AG04450 (cell line): ENCODE measurements at regions of chr6 and their contacts with region 1.

Region 1: DNA sequence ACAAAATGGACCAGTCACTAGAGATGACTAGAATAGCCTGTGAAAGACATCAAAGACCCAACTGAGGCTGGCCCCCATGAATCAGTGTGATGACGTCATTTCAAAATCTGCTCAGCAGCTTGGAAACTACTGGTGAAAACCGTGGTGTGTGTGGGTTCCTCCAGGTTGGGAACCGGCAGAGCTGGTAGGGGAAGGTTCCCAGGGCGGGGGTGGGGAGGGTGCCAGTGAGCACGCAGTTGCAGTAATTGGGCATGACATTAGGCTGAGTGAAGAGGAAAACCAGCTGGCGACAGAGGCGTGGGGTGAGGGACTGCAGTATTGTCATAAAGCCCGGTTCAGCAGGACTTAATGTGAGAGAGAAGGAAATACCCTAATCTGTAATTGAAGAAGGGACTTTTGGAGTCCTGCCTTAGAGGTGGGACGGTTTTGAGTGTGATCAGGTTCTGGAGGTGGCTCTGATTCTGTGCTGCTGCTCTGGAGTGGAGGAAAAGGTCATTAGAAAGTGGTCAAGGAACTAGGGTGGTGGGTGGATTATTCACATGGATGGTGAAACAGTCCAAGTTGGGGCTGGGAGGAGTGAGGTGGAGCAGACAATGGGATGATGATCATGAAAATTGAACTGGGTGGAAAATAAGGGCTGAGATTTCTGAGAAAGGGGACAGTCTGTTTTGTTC is 52.0 kb upstream of the MTHFD1L start:
- DNase-seq: no peak
- H3K4me3 ChIP-seq: no peak overlapping the region
- H3K27ac ChIP-seq: no peak overlapping the region
- H3K27me3 ChIP-seq: no peaks in the 10 kb centered on the region
- CTCF ChIP-seq: no peak

Region 2: GRCh38 chr6:150395398-150396009 is 418.0 kb before region 1 on chr6:
- CTCF ChIA-PET with region 1: interaction called, 11 read pairs
- POLR2A ChIA-PET with region 1: no interaction called
- DNase-seq: peak; percentile 6
- H3K4me3 ChIP-seq: no peak overlapping the region
- H3K27ac ChIP-seq: no peak overlapping the region
- H3K27me3 ChIP-seq: no peaks in the 10 kb centered on the region
- CTCF ChIP-seq: peak; percentile 72

Region 3: GRCh38 chr6:150830439-150831165 is 17.1 kb after region 1 on chr6:
- CTCF ChIA-PET with region 1: interaction called, 26 read pairs
- POLR2A ChIA-PET with region 1: no interaction called
- DNase-seq: peak; percentile 16
- H3K4me3 ChIP-seq: no peak overlapping the region
- H3K27ac ChIP-seq: no peak overlapping the region
- H3K27me3 ChIP-seq: no peaks in the 10 kb centered on the region
- CTCF ChIP-seq: no peak

Region 4: GRCh38 chr6:150865406-150866146 is 52.1 kb after region 1 on chr6 and contains the start of gene MTHFD1L:
- CTCF ChIA-PET with region 1: interaction called, 38 read pairs
- POLR2A ChIA-PET with region 1: interaction called, 12 read pairs
- DNase-seq: peak; percentile 67
- H3K4me3 ChIP-seq: peak within 1 kb of the TSS; percentile 77
- H3K27ac ChIP-seq: peak within 1 kb of the TSS; percentile 98
- H3K27me3 ChIP-seq: no peaks in the 10 kb centered on the region
- CTCF ChIP-seq: peak; percentile 47
- polyA plus RNA-seq, gene MTHFD1L: 62.4 and 69.1 TPM in 2 replicates

Region 5: DNA sequence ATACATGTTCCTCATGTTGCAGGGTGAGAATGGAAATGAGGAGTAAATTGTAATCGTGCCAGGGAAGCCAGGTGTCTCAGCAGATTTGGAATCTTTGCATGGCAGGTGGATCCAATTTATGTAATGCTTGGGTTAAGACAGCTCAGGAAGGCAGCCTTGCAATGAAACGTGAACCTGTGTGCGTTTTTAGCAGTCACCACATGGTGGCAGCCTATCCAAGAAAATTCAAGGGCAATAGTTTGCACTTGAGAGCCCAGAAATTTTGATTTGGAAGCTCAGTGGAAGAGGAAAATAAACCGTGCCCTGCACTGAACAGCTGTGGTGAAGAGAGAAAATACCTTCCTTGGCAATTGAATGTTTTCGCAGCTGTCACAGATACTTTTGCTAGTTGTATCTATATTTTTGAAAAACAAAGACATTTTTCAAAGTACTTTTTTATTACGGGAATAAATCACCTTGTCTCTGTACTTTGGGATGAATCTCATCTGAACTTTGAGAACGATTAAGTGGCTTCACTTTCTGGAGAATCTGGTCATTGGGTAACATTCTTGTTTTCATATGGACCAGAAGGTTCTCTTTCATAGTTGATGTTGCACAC is 78.5 kb after region 1 on chr6:
- CTCF ChIA-PET with region 1: interaction called, 49 read pairs
- POLR2A ChIA-PET with region 1: no interaction called
- DNase-seq: peak; percentile 72
- H3K4me3 ChIP-seq: no peak overlapping the region
- H3K27ac ChIP-seq: no peak overlapping the region
- H3K27me3 ChIP-seq: no peaks in the 10 kb centered on the region
- CTCF ChIP-seq: peak; percentile 89